Prostate gland (tissue), 2 donors: ENCODE measurements at regions of chr12 and their contacts with region 1.

Region 1: GRCh38 chr12:71754461-71755145 is at the start of gene RAB21:
- DNase-seq: peak; percentile 97
- H3K4me3 ChIP-seq: peak within 1 kb of the TSS; percentile 76 to 78
- H3K27ac ChIP-seq: peak within 1 kb of the TSS; percentile 93 to 94
- H3K4me1 ChIP-seq: no peaks in the 10 kb centered on the region
- H3K27me3 ChIP-seq: no peaks in the 10 kb centered on the region
- CTCF ChIP-seq: peak in 2 of 4 experiments; percentile 56 to 61
- POLR2A ChIP-seq: peak; percentile 94
- total RNA-seq, gene RAB21: 20.8 to 23.7 TPM

Region 2: GRCh38 chr12:71329956-71330355 is 424.6 kb before region 1 on chr12:
- intact Hi-C with region 1: no loop called
- DNase-seq: no peak
- H3K4me3 ChIP-seq: no peak overlapping the region
- H3K27ac ChIP-seq: no peak overlapping the region
- H3K4me1 ChIP-seq: no peaks in the 10 kb centered on the region
- H3K27me3 ChIP-seq: no peaks in the 10 kb centered on the region
- CTCF ChIP-seq: no peak
- POLR2A ChIP-seq: no peak

Region 3: DNA sequence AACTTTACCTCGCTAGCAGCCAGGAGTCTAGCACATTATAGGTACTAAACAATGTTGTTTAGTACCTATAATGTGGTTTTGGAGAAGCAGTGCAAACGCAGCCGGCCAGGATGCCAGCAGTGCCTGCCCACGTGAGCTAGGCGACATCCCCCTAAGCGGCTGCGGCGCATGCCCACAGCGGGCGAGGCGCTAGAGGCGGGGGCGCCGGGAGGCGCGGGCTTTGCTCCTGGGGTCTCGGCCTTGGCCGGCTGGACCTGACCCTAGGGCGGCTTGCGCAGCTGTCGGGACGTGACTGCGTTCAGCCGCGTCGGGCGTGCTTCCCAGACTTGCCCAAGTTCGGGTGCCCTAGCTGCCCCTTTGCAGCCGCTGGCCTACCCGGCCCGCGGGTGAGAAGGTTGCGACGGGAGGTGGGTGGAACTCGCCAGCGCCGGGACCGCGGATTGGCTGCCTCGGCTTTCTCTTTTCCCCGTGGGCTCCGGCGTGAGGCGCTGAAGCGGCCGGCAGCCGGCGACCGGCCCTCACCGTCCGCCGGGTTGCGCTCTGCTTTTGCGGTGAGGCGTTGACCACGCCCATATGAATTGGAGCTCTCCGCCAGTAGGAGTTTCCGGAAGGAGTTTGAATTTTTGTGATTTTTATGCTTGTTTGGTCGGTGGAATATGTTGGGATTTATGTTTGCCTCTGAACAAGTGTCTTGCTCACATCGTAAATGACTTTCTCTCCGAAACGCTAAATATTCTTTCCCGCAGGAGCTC is 68.5 kb before region 1 on chr12 and contains the start of gene TMEM19:
- intact Hi-C with region 1: loop called (anchors 5 kb)
- DNase-seq: peak; percentile 89
- H3K4me3 ChIP-seq: peak within 1 kb of the TSS; percentile 60 to 65
- H3K27ac ChIP-seq: peak within 1 kb of the TSS; percentile 83 to 89
- H3K4me1 ChIP-seq: no peaks in the 10 kb centered on the region
- H3K27me3 ChIP-seq: no peaks in the 10 kb centered on the region
- CTCF ChIP-seq: peak in 2 of 4 experiments; percentile 38 to 44
- POLR2A ChIP-seq: peak; percentile 53
- total RNA-seq, gene TMEM19: 21.1 to 39.0 TPM

Region 4: DNA sequence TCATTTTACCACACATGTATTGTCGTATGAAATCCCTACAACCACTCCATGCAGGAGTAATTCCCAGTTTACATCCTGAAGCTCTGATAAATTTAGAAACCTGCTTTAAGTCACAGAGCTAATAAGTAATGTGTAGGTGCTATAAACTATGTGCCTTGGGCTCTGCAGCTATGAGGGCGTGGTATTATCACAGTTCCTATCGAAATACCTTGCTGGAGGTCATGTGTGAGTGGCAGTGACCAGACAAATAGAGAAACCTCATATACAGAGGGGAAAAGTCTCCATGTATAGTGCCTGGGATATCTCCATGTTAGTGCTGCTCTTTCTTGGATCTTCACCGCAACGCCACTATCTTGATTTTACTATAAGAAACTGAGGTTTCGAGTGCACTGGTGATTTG is 84.1 kb after region 1 on chr12:
- intact Hi-C with region 1: loop called (anchors 1 kb)
- DNase-seq: no peak
- H3K4me3 ChIP-seq: no peak overlapping the region
- H3K27ac ChIP-seq: peak overlapping the region; percentile 98 to 99
- H3K4me1 ChIP-seq: no peaks in the 10 kb centered on the region
- H3K27me3 ChIP-seq: no peaks in the 10 kb centered on the region
- CTCF ChIP-seq: no peak
- POLR2A ChIP-seq: no peak